ENCODE measurements at regions of chr19 and their contacts with region 1.

Region 1: GRCh38 chr19:12789904-12790619 is 1.2 kb upstream of the JUNB start:
- DNase-seq: peak; percentile 87
- ATAC-seq: peak; percentile 38
- H3K4me3 ChIP-seq: peak overlapping the region; percentile 47 to 87 (median 60)
- H3K27ac ChIP-seq: peak overlapping the region; percentile 31
- H3K4me1 ChIP-seq: peaks cover 65% of the 10 kb centered on the region
- H3K27me3 ChIP-seq: no peaks in the 10 kb centered on the region; a peak in 1 of 5 replicates
- CTCF ChIP-seq: no peak
- EP300 ChIP-seq: no peak
- POLR2A ChIP-seq: peak in 1 of 2 experiments; percentile 48; a peak in 1 of 4 replicates
- RAD21 ChIP-seq: peak; percentile 30; the same call in 1 of the 2 replicates

Region 2: GRCh38 chr19:12696366-12697335 is 93.4 kb before region 1 on chr19 and contains the start of gene FBXW9:
- CTCF ChIA-PET with region 1: no interaction called
- POLR2A ChIA-PET with region 1: no interaction called
- in situ Hi-C with region 1: no loop called
- intact Hi-C with region 1: no loop called
- DNase-seq: peak; percentile 90
- ATAC-seq: peak; percentile 86
- H3K4me3 ChIP-seq: peak within 1 kb of the TSS; percentile 79 to 100 (median 92)
- H3K27ac ChIP-seq: peak within 1 kb of the TSS; percentile 76
- H3K4me1 ChIP-seq: peaks cover 16% of the 10 kb centered on the region
- H3K27me3 ChIP-seq: no peaks in the 10 kb centered on the region; a peak in 1 of 5 replicates
- CTCF ChIP-seq: peak; percentile 28; the same call in 1 of the 2 replicates
- EP300 ChIP-seq: no peak
- POLR2A ChIP-seq: peak; percentile 65 to 85
- RAD21 ChIP-seq: peak; percentile 52; the same call in 1 of the 2 replicates
- total RNA-seq, gene FBXW9: 4.6 and 6.1 TPM in 2 replicates

Region 3: DNA sequence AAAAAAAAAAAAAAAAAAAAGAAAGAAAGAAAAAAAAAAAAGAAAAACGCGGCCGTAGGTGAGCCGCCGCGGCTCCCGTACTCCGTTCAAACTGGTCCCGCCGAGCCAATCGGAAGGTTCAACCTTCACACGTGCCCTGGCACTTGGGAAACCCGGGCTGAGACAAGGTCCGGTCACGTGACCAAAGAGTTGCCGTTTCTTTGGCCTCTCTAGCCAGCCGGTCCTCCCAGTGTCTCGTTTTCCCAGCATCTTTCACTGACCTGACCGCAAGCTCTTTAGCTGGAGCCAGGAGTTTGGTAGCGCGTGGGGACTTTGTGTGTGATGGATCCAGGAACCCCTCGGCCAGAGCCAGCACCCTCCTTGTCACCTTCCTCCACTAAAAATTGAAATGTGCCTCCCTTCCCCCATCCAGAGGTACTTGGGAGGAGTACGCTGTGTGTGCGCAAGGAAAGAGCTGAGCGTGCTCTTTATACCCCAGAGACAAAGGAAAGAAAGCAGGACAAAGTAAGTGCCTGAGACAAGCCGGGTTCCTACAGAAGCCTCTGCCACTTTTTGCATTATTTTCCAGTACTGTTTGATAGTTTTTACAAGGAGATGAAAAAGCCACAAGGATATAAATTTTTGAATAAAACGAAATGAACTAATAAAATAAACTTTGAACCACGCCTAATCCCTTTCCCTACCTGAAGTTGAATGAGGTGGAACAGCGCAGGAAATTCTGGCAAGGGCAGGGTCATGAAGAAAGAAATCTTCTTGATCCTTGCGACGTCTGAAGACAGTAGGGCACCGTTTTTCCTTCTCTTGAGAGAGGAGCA is 67.3 kb before region 1 on chr19:
- CTCF ChIA-PET with region 1: no interaction called
- POLR2A ChIA-PET with region 1: interaction called, 21 read pairs
- in situ Hi-C with region 1: no loop called
- intact Hi-C with region 1: no loop called
- DNase-seq: peak; percentile 99
- ATAC-seq: peak; percentile 75
- H3K4me3 ChIP-seq: peak overlapping the region; percentile 92 to 96 (median 93)
- H3K27ac ChIP-seq: peak overlapping the region; percentile 77
- H3K4me1 ChIP-seq: peaks cover 20% of the 10 kb centered on the region
- H3K27me3 ChIP-seq: no peaks in the 10 kb centered on the region; a peak in 1 of 5 replicates
- CTCF ChIP-seq: no peak; the same call in 1 of the 2 replicates
- EP300 ChIP-seq: no peak
- POLR2A ChIP-seq: peak; percentile 69 to 75
- RAD21 ChIP-seq: no peak

Region 4: GRCh38 chr19:12736995-12737834 is 52.8 kb before region 1 on chr19 and contains the start of gene GET3:
- CTCF ChIA-PET with region 1: no interaction called
- POLR2A ChIA-PET with region 1: interaction called, 15 read pairs
- in situ Hi-C with region 1: no loop called
- intact Hi-C with region 1: no loop called
- DNase-seq: peak; percentile 100
- ATAC-seq: peak; percentile 93
- H3K4me3 ChIP-seq: peak within 1 kb of the TSS; percentile 88 to 98 (median 93)
- H3K27ac ChIP-seq: peak within 1 kb of the TSS; percentile 99
- H3K4me1 ChIP-seq: peaks cover 43% of the 10 kb centered on the region
- H3K27me3 ChIP-seq: no peaks in the 10 kb centered on the region; a peak in 1 of 5 replicates
- CTCF ChIP-seq: no peak
- EP300 ChIP-seq: no peak; a peak in 1 of 4 replicates
- POLR2A ChIP-seq: peak; percentile 77 to 92
- RAD21 ChIP-seq: 0 out of 2 replicates have a peak, but pooled peaks have one; percentile 29
- total RNA-seq, gene GET3: 51.5 and 57.7 TPM in 2 replicates

Region 5: GRCh38 chr19:12757544-12758274 is 32.4 kb before region 1 on chr19:
- CTCF ChIA-PET with region 1: interaction called, 3 read pairs
- POLR2A ChIA-PET with region 1: interaction called, 14 read pairs
- in situ Hi-C with region 1: no loop called
- intact Hi-C with region 1: no loop called
- DNase-seq: peak; percentile 70
- ATAC-seq: peak; percentile 90
- H3K4me3 ChIP-seq: peak overlapping the region; percentile 40 to 73 (median 51); a peak in 5 of 6 replicates
- H3K27ac ChIP-seq: no peak overlapping the region
- H3K4me1 ChIP-seq: peaks cover 14% of the 10 kb centered on the region
- H3K27me3 ChIP-seq: peaks cover 0 to 11% of the 10 kb centered on the region in 2 experiments; a peak in 4 of 5 replicates
- CTCF ChIP-seq: peak; percentile 92
- EP300 ChIP-seq: no peak
- POLR2A ChIP-seq: no peak
- RAD21 ChIP-seq: peak; percentile 83

Region 6: GRCh38 chr19:12766051-12766521 is 24.0 kb before region 1 on chr19:
- CTCF ChIA-PET with region 1: no interaction called
- POLR2A ChIA-PET with region 1: interaction called, 31 read pairs
- in situ Hi-C with region 1: no loop called
- intact Hi-C with region 1: no loop called
- DNase-seq: peak; percentile 76
- ATAC-seq: peak; percentile 95
- H3K4me3 ChIP-seq: peak overlapping the region; percentile 60 to 87 (median 79)
- H3K27ac ChIP-seq: peak overlapping the region; percentile 50
- H3K4me1 ChIP-seq: 0 out of 2 replicates have a peak, but pooled peaks cover 4% of the 10 kb centered on the region
- H3K27me3 ChIP-seq: no peaks in the 10 kb centered on the region
- CTCF ChIP-seq: peak; percentile 99
- EP300 ChIP-seq: no peak
- POLR2A ChIP-seq: 0 out of 4 replicates have a peak, but pooled peaks of 1 of the 2 experiments have one; percentile 32
- RAD21 ChIP-seq: peak; percentile 92

Region 7: DNA sequence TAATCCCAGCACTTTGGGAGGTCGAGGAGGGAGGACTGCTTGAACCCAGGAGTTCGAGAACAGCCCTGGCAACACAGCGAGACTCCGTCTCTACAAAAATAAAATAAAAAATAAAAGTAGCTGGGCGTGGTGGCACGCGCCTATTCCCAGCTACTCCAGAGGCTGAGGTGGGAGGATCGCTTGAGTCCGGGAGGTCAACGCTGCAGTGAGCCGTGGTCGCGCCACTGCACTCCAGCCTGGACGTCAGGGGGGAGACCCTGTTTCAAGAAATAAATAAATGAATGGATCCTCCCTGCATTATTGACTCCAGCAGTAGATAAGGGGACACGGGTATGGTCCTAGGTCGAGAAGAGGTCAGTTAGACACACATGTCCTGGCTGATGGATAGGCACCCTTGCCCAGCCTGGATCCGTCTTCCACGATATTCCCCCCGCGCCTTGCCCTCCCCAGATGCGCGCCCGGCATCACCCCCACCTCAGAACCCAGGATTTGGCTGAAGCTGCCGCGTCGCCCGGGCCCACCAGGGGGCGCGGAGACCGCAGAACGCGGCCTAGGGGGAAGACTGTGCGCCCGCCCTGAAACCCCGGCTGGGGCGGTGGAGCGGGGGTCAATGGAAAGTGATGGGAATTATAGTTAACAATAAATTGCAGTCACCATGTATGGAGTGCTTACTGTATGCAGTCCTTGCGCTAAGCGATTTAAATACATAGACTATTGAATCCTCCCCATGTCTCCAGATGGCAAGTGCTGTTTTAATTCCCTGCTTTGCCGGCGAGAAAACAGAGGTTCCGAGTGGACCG is 12.6 kb before region 1 on chr19:
- CTCF ChIA-PET with region 1: interaction called, 54 read pairs
- POLR2A ChIA-PET with region 1: interaction called, 124 read pairs
- in situ Hi-C with region 1: no loop called
- intact Hi-C with region 1: no loop called
- DNase-seq: peak; percentile 50
- ATAC-seq: peak; percentile 66
- H3K4me3 ChIP-seq: peak overlapping the region; percentile 76 to 80 (median 79)
- H3K27ac ChIP-seq: no peak overlapping the region
- H3K4me1 ChIP-seq: peaks cover 43% of the 10 kb centered on the region
- H3K27me3 ChIP-seq: no peaks in the 10 kb centered on the region; a peak in 1 of 5 replicates
- CTCF ChIP-seq: peak; percentile 92
- EP300 ChIP-seq: no peak
- POLR2A ChIP-seq: no peak
- RAD21 ChIP-seq: peak; percentile 89

Region 8: DNA sequence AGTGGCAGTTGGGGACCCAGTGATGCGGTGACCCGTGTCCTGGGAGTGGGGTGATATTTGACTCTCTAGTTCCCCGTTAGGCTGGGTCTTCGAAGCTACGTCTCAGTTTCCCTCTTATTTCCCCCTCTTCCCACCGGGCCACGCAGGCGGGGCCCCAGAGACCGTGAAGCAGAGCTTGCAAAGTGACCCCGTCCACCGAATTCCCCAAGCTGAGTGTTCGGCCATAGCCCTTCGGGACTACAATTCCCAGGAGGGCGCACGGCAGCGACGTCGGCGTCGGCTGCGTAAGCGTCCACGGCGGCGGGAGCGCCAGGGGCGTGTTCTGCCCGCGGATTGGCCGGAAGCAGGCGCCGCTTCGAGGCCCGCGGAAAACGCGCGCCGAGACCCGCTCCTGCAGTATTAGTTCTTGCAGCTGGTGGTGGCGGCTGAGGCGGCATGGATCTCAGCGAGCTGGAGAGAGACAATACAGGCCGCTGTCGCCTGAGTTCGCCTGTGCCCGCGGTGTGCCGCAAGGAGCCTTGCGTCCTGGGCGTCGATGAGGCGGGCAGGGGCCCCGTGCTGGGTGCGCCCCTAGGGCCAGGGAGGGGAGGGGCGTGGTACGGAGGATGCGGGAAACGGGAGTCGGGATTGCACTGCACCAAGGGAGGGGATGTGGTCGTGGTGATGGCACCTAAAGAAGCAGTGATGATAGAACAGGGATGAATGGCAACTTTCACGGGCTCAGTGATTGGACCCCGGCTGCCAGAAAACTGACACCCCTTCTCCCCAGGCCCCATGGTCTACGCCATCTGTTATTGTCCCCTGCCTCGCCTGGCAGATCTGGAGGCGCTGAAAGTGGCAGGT is 16.4 kb after region 1 on chr19 and contains the start of gene RNASEH2A:
- CTCF ChIA-PET with region 1: no interaction called
- POLR2A ChIA-PET with region 1: interaction called, 47 read pairs
- in situ Hi-C with region 1: no loop called
- intact Hi-C with region 1: no loop called
- DNase-seq: peak; percentile 70
- ATAC-seq: peak; percentile 93
- H3K4me3 ChIP-seq: peak within 1 kb of the TSS; percentile 69 to 87 (median 82)
- H3K27ac ChIP-seq: peak within 1 kb of the TSS; percentile 67
- H3K4me1 ChIP-seq: peaks cover 17% of the 10 kb centered on the region
- H3K27me3 ChIP-seq: no peaks in the 10 kb centered on the region; a peak in 1 of 5 replicates
- CTCF ChIP-seq: peak; percentile 22; the same call in 1 of the 2 replicates
- EP300 ChIP-seq: no peak
- POLR2A ChIP-seq: peak; percentile 67 to 86
- RAD21 ChIP-seq: no peak; the same call in 1 of the 2 replicates
- total RNA-seq, gene RNASEH2A: 35.8 and 44.0 TPM in 2 replicates

Measured in HepG2 (cell line).